Activated naive CD4-positive, alpha-beta T cell treated with anti-CD3 and anti-CD28 coated beads for 36 hours (primary cell): ENCODE measurements at regions of chr1 and their contacts with region 1.

Region 1: GRCh38 chr1:236103646-236104218 is 38.6 kb upstream of the GPR137B start:
- DNase-seq: peak; percentile 80
- H3K4me3 Mint-ChIP-seq: no peak overlapping the region
- H3K27ac Mint-ChIP-seq: no peak overlapping the region
- H3K4me1 Mint-ChIP-seq: peaks cover 2% of the 10 kb centered on the region
- H3K27me3 Mint-ChIP-seq: no peaks in the 10 kb centered on the region

Region 2: GRCh38 chr1:236085545-236086159 is 18.1 kb before region 1 on chr1:
- CTCF ChIA-PET with region 1: no interaction called
- intact Hi-C with region 1: no loop called
- DNase-seq: no peak
- H3K4me3 Mint-ChIP-seq: no peak overlapping the region
- H3K27ac Mint-ChIP-seq: no peak overlapping the region
- H3K4me1 Mint-ChIP-seq: no peaks in the 10 kb centered on the region
- H3K27me3 Mint-ChIP-seq: no peaks in the 10 kb centered on the region

Region 3: GRCh38 chr1:236303687-236304086 is 200.0 kb after region 1 on chr1:
- CTCF ChIA-PET with region 1: interaction called, 5 read pairs
- intact Hi-C with region 1: loop called (anchors 2 kb)
- DNase-seq: peak; percentile 42
- H3K4me3 Mint-ChIP-seq: no peak overlapping the region
- H3K27ac Mint-ChIP-seq: no peak overlapping the region
- H3K4me1 Mint-ChIP-seq: peaks cover 2% of the 10 kb centered on the region
- H3K27me3 Mint-ChIP-seq: no peaks in the 10 kb centered on the region

Region 4: DNA sequence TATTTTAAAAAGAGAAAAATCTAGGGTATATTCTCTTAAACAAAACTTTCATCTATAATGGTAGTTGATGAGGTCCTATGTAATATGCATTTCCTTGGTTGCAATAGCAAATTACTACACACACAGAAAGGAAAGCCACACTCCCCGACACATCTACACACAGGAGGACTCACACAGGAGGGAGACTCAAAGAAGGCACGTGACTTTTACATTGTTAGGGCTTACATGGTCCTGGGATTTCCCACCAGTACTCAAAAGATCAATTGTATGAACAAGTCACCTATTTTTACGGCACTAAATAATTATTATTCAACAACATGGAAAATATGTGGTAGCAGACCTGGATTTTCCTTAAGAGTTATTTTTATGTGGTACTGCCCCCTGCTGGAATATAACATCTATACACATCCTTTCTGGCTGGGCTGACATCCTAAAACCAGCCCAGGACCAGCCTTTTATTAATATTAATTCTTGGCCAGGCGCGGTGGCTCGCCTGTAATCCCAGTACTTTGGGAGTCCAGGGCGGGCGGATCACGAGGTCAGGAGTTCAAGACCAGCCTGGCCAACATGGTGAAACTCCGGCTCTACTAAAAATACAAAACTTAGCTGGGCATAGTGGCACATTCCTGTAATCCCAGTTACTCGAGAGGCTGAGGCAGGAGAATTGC is 386.1 kb after region 1 on chr1:
- CTCF ChIA-PET with region 1: interaction called, 10 read pairs
- intact Hi-C with region 1: loop called (anchors 1 kb)
- DNase-seq: no peak
- H3K4me3 Mint-ChIP-seq: no peak overlapping the region
- H3K27ac Mint-ChIP-seq: no peak overlapping the region
- H3K4me1 Mint-ChIP-seq: no peaks in the 10 kb centered on the region
- H3K27me3 Mint-ChIP-seq: peaks cover 6% of the 10 kb centered on the region

Region 5: GRCh38 chr1:236590553-236591150 is 486.9 kb after region 1 on chr1:
- CTCF ChIA-PET with region 1: no interaction called
- intact Hi-C with region 1: loop called (anchors 5 kb)
- DNase-seq: no peak
- H3K4me3 Mint-ChIP-seq: no peak overlapping the region
- H3K27ac Mint-ChIP-seq: no peak overlapping the region
- H3K4me1 Mint-ChIP-seq: peaks cover 18% of the 10 kb centered on the region
- H3K27me3 Mint-ChIP-seq: no peaks in the 10 kb centered on the region

Region 6: GRCh38 chr1:236868625-236869467 is 765.1 kb after region 1 on chr1:
- CTCF ChIA-PET with region 1: interaction called, 6 read pairs
- intact Hi-C with region 1: loop called (anchors 5 kb)
- DNase-seq: peak; percentile 61
- H3K4me3 Mint-ChIP-seq: no peak overlapping the region
- H3K27ac Mint-ChIP-seq: no peak overlapping the region
- H3K4me1 Mint-ChIP-seq: peaks cover 2% of the 10 kb centered on the region
- H3K27me3 Mint-ChIP-seq: no peaks in the 10 kb centered on the region

Region 7: DNA sequence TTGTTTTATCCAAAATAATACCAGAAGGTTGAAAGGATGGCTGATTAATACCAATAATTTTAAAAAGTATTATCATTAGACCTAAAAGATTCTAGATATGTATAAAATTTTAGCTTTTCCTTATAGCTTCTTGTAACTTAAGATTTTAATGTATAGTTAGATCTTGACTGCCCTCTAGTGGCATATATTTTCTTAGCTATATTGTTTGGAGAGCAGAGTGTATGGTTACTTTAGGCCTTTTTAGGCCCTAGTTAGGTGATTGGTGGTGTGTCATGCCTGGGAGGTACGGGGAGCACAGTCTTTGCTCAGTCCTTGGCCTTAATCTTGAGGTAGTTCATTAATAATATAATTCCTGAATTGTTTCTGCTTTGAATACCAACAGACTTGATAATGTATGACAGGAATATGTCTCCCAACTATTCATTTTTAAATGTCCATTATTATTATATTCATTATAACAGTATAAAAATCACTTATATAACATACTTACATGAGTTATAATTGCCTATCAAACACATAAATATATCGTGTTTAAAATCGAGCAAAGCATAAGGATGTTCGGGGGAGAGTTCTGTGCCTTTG is 1458.6 kb after region 1 on chr1:
- CTCF ChIA-PET with region 1: no interaction called
- intact Hi-C with region 1: loop called (anchors 5 kb)
- DNase-seq: no peak
- H3K4me3 Mint-ChIP-seq: no peak overlapping the region
- H3K27ac Mint-ChIP-seq: no peak overlapping the region
- H3K4me1 Mint-ChIP-seq: no peaks in the 10 kb centered on the region
- H3K27me3 Mint-ChIP-seq: peaks cover 7% of the 10 kb centered on the region